Activated CD4-positive, alpha-beta memory T cell treated with anti-CD3 and anti-CD28 coated beads, Interleukin-2, amount 10 ng/mL, durations not matched to agents 7 days and 5 days (primary cell): ENCODE measurements at regions of chr1 and their contacts with region 1.

Region 1: DNA sequence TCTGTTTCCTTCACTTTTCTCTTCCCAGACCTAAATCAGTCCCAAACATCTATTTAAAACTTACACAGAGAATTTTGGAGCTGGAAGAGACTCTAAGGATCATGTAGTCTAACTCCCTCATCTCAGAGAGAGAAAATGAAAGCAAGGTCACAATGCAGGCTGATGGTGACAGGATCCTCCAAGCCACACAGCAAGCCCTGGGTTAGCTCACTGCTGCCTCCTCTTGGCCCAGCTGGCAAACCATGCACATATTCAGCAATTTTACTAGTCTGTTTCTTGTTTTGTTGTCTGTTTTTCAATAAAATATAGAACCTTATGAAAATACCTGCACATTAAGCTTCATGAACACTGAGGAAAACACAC is 27.7 kb upstream of the LY9 start:
- DNase-seq: peak; percentile 90
- H3K4me3 Mint-ChIP-seq: peak overlapping the region; percentile 70
- H3K27ac Mint-ChIP-seq: peak overlapping the region; percentile 86
- H3K4me1 Mint-ChIP-seq: peaks cover 26% of the 10 kb centered on the region
- H3K27me3 Mint-ChIP-seq: peaks cover 4% of the 10 kb centered on the region

Region 2: GRCh38 chr1:160342953-160343869 is 425.1 kb before region 1 on chr1 and contains the starts of genes COPA and NCSTN:
- CTCF ChIA-PET with region 1: no interaction called
- POLR2A ChIA-PET with region 1: no interaction called
- DNase-seq: peak; percentile 92
- H3K4me3 Mint-ChIP-seq: peak within 1 kb of the TSS; percentile 99
- H3K27ac Mint-ChIP-seq: peak within 1 kb of the TSS; percentile 97
- H3K4me1 Mint-ChIP-seq: peaks cover 59% of the 10 kb centered on the region
- H3K27me3 Mint-ChIP-seq: no peaks in the 10 kb centered on the region
- total RNA-seq, gene COPA: 145 to 146 TPM
- total RNA-seq, gene NCSTN: 64.5 to 65.3 TPM

Region 3: GRCh38 chr1:160646711-160647328 is 121.5 kb before region 1 on chr1 and contains the start of gene SLAMF1:
- CTCF ChIA-PET with region 1: interaction called, 11 read pairs
- POLR2A ChIA-PET with region 1: no interaction called
- DNase-seq: peak; percentile 49
- H3K4me3 Mint-ChIP-seq: peak within 1 kb of the TSS; percentile 88
- H3K27ac Mint-ChIP-seq: peak within 1 kb of the TSS; percentile 89
- H3K4me1 Mint-ChIP-seq: peaks cover 53% of the 10 kb centered on the region
- H3K27me3 Mint-ChIP-seq: no peaks in the 10 kb centered on the region
- total RNA-seq, gene SLAMF1: 106 to 113 TPM

Region 4: GRCh38 chr1:160681067-160681890 is 87.0 kb before region 1 on chr1:
- CTCF ChIA-PET with region 1: interaction called, 108 read pairs
- POLR2A ChIA-PET with region 1: interaction called, 20 read pairs
- DNase-seq: peak; percentile 90
- H3K4me3 Mint-ChIP-seq: no peak overlapping the region
- H3K27ac Mint-ChIP-seq: peak overlapping the region; percentile 96
- H3K4me1 Mint-ChIP-seq: peaks cover 79% of the 10 kb centered on the region
- H3K27me3 Mint-ChIP-seq: no peaks in the 10 kb centered on the region

Region 5: DNA sequence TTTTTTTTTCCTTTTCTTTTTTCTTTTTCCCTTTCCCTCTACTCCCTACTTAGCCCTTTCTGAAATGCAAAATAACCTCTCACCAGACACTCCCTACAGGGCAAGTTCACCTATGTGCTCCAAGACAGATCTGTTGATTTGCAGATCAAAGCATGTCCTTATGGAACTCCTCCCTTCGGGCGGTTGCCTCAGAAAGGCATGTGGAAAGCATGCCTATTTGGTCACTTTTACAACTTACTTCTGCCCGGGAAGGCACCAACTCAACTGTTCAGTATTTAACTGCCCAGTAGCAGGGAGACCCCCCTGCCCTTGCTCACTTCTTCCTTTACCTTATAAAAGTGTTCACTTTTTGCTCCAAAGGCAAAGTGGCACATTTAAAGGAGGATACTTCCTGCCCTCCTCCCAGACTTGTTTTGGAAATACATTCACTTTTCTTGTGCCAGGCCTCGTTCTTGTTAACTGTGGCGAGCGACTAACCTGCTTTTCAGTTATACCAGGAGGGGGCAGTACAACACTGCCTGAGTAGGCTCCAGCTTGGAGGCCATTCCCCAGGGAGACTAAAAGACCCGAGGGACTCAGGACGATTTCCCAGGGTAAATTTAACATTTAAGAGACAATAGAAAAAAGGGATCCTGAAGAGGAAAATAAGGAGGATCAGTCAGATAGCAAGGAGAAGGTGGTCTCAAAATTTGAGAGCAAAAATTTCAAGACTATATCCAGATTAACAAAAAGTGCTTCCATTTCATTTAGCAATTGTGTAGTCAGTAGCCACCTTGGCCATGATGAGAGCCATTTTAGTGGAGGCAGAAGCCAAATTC is 41.6 kb before region 1 on chr1:
- CTCF ChIA-PET with region 1: interaction called, 179 read pairs
- POLR2A ChIA-PET with region 1: interaction called, 56 read pairs
- DNase-seq: peak; percentile 70
- H3K4me3 Mint-ChIP-seq: no peak overlapping the region
- H3K27ac Mint-ChIP-seq: no peak overlapping the region
- H3K4me1 Mint-ChIP-seq: peaks cover 31% of the 10 kb centered on the region
- H3K27me3 Mint-ChIP-seq: no peaks in the 10 kb centered on the region

Region 6: DNA sequence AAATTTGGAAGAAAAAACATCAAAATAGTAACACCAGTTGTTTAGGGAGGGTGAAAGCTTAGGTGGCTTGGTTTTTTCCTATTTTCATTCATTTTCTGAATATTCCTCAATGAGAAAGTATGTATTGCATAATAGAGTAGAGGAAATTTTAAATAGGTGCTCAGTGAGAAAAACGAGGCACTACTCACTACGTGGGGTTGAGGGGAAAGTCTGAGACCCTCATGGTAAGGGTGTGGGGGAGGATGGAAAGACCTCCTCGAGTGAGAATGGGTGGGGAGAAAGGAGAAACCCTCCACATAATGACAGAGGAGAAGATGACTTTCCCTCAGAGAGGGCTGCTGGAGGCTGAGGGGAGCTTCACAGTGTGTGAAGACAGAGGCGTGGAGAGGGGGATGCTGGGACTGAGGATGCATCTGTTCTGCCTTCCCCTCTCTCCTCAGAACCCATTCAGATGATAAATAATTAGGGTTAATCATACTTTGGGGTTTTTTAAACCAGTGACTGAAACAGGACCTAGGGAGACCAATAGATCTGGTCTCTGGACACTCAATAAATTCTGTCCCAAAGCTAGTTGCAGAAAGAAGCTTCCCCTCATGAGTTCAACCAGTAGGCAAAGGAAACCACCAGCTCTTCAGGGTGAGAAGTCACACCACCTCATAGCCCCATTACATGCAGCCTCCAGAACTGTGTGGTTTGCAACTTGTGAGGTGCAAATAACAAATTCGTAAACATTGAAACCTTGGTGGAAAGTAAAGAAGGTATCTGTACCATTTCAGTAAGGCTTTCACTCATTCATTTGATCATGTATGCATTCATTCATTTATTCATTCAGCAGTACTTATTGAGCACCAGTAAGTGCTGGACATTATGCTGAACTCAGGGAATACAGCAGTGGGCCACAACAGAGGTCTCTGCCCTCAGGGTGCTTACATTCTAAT is 12.1 kb before region 1 on chr1:
- CTCF ChIA-PET with region 1: interaction called, 16 read pairs
- POLR2A ChIA-PET with region 1: interaction called, 9 read pairs
- DNase-seq: peak; percentile 52
- H3K4me3 Mint-ChIP-seq: no peak overlapping the region
- H3K27ac Mint-ChIP-seq: peak overlapping the region; percentile 79
- H3K4me1 Mint-ChIP-seq: peaks cover 33% of the 10 kb centered on the region
- H3K27me3 Mint-ChIP-seq: no peaks in the 10 kb centered on the region

Region 7: GRCh38 chr1:160830321-160831153 is 62.3 kb after region 1 on chr1:
- CTCF ChIA-PET with region 1: interaction called, 16 read pairs
- POLR2A ChIA-PET with region 1: no interaction called
- DNase-seq: peak; percentile 80
- H3K4me3 Mint-ChIP-seq: no peak overlapping the region
- H3K27ac Mint-ChIP-seq: no peak overlapping the region
- H3K4me1 Mint-ChIP-seq: peaks cover 18% of the 10 kb centered on the region
- H3K27me3 Mint-ChIP-seq: no peaks in the 10 kb centered on the region

Region 8: GRCh38 chr1:160963521-160963920 is 195.2 kb after region 1 on chr1:
- CTCF ChIA-PET with region 1: no interaction called
- POLR2A ChIA-PET with region 1: no interaction called
- DNase-seq: no peak
- H3K4me3 Mint-ChIP-seq: no peak overlapping the region
- H3K27ac Mint-ChIP-seq: no peak overlapping the region
- H3K4me1 Mint-ChIP-seq: no peaks in the 10 kb centered on the region
- H3K27me3 Mint-ChIP-seq: peaks cover 2% of the 10 kb centered on the region

Region 9: DNA sequence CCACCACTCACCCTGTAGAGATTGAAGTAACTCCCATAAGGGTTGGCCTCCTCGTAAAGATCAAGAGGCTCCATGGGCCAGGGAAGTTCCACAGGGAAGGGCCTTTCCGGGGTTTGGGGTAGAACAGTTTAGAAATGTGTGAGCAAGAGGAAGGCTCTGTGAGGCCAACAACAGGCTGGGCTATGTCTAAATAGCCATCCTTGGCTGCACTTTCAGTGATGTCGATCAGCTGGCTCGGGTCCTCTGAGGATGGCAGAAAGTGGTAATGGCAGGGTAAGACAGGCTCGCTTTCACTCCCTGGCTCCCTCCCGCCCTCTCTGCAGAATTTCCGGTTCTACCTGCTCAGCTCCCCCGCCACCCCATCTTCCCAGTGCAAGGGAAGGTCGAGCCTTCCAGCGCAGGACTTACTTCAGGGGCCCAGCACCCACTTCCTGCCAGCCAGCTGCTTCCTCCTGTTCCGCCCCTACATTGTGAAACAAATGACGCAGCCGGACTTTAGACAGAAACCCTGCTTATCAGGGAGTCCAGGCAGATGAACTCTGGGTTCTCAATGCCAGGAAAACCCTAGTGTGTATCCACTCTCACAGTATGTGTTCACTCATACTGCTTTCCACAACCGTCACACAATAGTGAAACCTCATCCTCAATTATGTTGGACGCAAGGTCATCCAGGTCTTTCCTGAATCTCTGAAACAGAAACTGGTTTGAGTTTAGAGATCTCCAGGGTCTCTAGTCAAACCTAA is 245.4 kb after region 1 on chr1:
- CTCF ChIA-PET with region 1: no interaction called
- POLR2A ChIA-PET with region 1: no interaction called
- DNase-seq: peak; percentile 75
- H3K4me3 Mint-ChIP-seq: peak overlapping the region; percentile 66
- H3K27ac Mint-ChIP-seq: peak overlapping the region; percentile 94
- H3K4me1 Mint-ChIP-seq: peaks cover 35% of the 10 kb centered on the region
- H3K27me3 Mint-ChIP-seq: no peaks in the 10 kb centered on the region